ENCODE measurements at regions of chr14 and their contacts with region 1.

Region 1: DNA sequence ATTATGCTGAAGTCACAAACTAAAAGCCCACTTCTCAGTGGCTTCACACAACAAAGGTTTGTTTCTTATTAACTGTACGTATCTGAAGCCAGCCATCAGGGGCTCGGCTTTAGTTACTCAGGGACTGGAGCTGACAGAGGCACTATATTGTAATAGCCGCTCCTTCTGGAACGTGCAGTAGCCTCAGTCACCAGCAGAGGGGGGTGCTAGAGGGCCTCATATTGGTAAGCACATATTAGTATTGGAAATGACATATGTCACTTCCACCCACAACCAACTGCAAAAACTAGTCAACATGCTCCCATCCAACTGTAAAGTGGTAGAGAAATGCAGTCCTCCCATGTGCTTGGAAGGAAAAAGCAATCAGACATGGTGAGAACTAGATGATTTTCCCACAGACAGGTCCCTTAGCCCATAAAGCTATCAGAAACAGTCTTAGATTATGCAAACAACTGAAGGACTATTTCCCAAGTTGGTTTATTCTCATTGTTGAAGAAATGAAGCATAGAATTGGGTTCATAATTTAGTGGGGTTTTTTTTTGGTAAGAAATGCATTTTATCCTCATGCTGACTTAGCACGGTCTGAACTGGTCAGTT is 183.6 kb upstream of the G2E3 start:
- DNase-seq: peak; percentile 74 to 76
- H3K4me3 ChIP-seq: no peak overlapping the region
- H3K4me3 Mint-ChIP-seq: no peak overlapping the region
- H3K27ac Mint-ChIP-seq: no peak overlapping the region
- H3K4me1 ChIP-seq: no peaks in the 10 kb centered on the region
- H3K4me1 Mint-ChIP-seq: no peaks in the 10 kb centered on the region
- H3K27me3 ChIP-seq: no peaks in the 10 kb centered on the region
- H3K27me3 Mint-ChIP-seq: no peaks in the 10 kb centered on the region
- CTCF ChIP-seq: peak; percentile 71 to 74

Region 2: GRCh38 chr14:30330445-30330844 is 44.9 kb before region 1 on chr14:
- CTCF ChIA-PET with region 1: no interaction called
- POLR2A ChIA-PET with region 1: no interaction called
- intact Hi-C with region 1: no loop called
- DNase-seq: peak in 1 of 2 experiments; percentile 3
- H3K4me3 ChIP-seq: no peak overlapping the region
- H3K4me3 Mint-ChIP-seq: no peak overlapping the region
- H3K27ac Mint-ChIP-seq: no peak overlapping the region
- H3K4me1 ChIP-seq: no peaks in the 10 kb centered on the region
- H3K4me1 Mint-ChIP-seq: no peaks in the 10 kb centered on the region
- H3K27me3 ChIP-seq: no peaks in the 10 kb centered on the region
- H3K27me3 Mint-ChIP-seq: peaks cover 13% of the 10 kb centered on the region
- CTCF ChIP-seq: peak; percentile 26 to 44

Region 3: GRCh38 chr14:30389134-30389876 is 13.9 kb after region 1 on chr14:
- CTCF ChIA-PET with region 1: no interaction called
- POLR2A ChIA-PET with region 1: no interaction called
- intact Hi-C with region 1: no loop called
- DNase-seq: no peak
- H3K4me3 ChIP-seq: no peak overlapping the region
- H3K4me3 Mint-ChIP-seq: no peak overlapping the region
- H3K27ac Mint-ChIP-seq: no peak overlapping the region
- H3K4me1 ChIP-seq: no peaks in the 10 kb centered on the region
- H3K4me1 Mint-ChIP-seq: no peaks in the 10 kb centered on the region
- H3K27me3 ChIP-seq: no peaks in the 10 kb centered on the region
- H3K27me3 Mint-ChIP-seq: peaks cover 6% of the 10 kb centered on the region
- CTCF ChIP-seq: no peak

Region 4: GRCh38 chr14:30521899-30522736 is 146.7 kb after region 1 on chr14:
- CTCF ChIA-PET with region 1: no interaction called
- POLR2A ChIA-PET with region 1: no interaction called
- intact Hi-C with region 1: loop called (anchors 1 kb)
- DNase-seq: peak in 1 of 2 experiments; percentile 20
- H3K4me3 ChIP-seq: no peak overlapping the region
- H3K4me3 Mint-ChIP-seq: no peak overlapping the region
- H3K27ac Mint-ChIP-seq: no peak overlapping the region
- H3K4me1 ChIP-seq: no peaks in the 10 kb centered on the region
- H3K4me1 Mint-ChIP-seq: no peaks in the 10 kb centered on the region
- H3K27me3 ChIP-seq: no peaks in the 10 kb centered on the region
- H3K27me3 Mint-ChIP-seq: peaks cover 7% of the 10 kb centered on the region
- CTCF ChIP-seq: peak; percentile 61 to 69

Region 5: DNA sequence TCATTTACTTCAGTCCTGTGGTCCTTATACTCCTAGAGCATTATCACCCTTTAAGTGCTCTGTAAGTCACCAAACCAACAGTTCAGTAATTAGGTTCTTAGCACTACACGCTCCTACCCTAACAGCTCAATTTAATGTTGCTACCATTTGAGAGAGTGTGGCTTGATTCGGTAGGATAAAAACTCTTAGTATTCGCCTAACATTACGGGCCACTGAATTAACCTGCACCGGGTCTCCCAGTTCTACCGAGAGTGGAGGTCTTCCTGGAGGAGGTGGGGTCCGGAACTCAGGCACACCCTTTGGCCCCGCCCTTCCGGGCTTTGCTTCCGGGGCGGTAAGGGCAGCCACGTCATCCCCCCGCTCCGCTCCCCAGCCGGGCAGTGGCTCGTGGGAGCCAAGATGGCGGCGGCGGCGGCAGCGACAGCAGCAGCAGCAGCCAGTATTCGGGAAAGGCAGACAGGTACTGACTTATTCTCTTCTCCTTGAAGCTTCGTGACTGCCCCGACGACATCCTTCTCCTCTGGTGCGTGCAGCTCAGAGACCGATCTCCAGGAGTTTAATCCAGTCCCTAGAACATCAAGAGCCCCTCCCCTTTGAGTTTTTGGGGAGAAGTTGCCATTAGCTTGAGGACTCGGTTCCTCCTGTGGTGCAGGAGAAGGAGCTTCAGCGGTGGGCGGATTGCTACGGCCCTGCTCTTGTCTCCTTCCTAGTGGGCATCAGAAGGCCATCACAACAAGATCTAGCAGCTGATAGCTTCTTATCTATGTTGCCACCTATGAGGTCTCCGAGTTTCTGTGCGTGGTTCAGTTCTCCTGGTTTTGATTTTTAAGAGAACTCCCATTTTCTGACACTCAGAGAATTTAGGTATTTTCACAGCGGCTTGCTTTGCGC is 246.8 kb after region 1 on chr14 and contains the start of gene SCFD1:
- CTCF ChIA-PET with region 1: no interaction called
- POLR2A ChIA-PET with region 1: no interaction called
- intact Hi-C with region 1: loop called (anchors 10 kb)
- DNase-seq: peak; percentile 94 to 96
- H3K4me3 ChIP-seq: peak within 1 kb of the TSS; percentile 74
- H3K4me3 Mint-ChIP-seq: peak within 1 kb of the TSS; percentile 82
- H3K27ac Mint-ChIP-seq: peak within 1 kb of the TSS; percentile 92
- H3K4me1 ChIP-seq: no peaks in the 10 kb centered on the region
- H3K4me1 Mint-ChIP-seq: peaks cover 13% of the 10 kb centered on the region
- H3K27me3 ChIP-seq: no peaks in the 10 kb centered on the region
- H3K27me3 Mint-ChIP-seq: no peaks in the 10 kb centered on the region
- CTCF ChIP-seq: no peak
- total RNA-seq, gene SCFD1: 78.1 and 89.4 TPM in 2 replicates